B cell (primary cell): ENCODE measurements at regions of chr14 and their contacts with region 1.

Region 1: DNA sequence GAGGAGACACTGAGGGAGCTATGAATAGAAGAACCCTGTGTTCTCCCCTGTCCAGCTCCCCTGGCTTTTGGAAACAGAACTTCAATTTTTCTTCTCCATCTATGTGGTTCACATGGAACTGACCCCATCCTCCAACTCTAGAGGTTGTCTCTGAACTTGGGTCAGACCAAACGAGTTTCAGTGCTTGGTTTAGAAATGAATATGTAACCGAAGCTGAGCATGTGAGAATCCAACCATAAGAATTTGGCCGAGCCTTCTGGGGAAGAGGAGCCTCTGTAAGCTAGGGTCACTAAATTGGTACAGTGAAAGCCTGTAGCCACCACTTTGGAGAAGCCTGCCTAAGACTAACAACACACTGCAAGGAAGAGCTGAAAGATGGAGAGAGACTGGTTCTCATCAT is 464.4 kb downstream of the ZFP36L1 start:
- DNase-seq: no peak
- ATAC-seq: no peak
- H3K4me3 ChIP-seq: no peak overlapping the region
- H3K4me3 Mint-ChIP-seq: no peak overlapping the region
- H3K27ac ChIP-seq: no peak overlapping the region
- H3K27ac Mint-ChIP-seq: no peak overlapping the region
- H3K4me1 ChIP-seq: peaks cover 47 to 53% of the 10 kb centered on the region in 2 donors
- H3K4me1 Mint-ChIP-seq: peaks cover 59% of the 10 kb centered on the region
- H3K27me3 ChIP-seq: no peaks in the 10 kb centered on the region
- H3K27me3 Mint-ChIP-seq: no peaks in the 10 kb centered on the region
- CTCF ChIP-seq: no peak

Region 2: DNA sequence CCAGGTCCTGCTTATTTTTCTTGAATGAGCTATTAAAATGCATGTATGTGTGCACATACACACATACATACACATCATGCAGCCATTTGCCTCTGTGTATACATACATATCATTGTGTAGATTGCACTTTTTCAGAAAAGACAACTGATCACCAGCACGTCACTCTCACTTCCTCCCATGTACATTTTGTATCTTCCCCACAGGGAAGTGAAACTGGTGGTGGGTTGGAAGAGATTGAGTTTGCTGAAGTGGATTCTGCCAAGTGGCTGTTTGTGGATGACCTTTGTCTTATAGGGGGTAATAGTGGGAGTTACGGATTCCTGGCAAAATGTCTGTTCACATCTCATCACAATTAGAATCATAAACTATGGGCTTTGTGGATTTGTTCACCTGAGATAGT is 60.3 kb before region 1 on chr14:
- CTCF ChIA-PET with region 1: no interaction called
- POLR2A ChIA-PET with region 1: no interaction called
- intact Hi-C with region 1: loop called (anchors 5 kb)
- DNase-seq: peak; percentile 92
- ATAC-seq: peak; percentile 71
- H3K4me3 ChIP-seq: peak overlapping the region in 1 of 5 experiments; percentile 14
- H3K4me3 Mint-ChIP-seq: peak overlapping the region; percentile 72
- H3K27ac ChIP-seq: peak overlapping the region; percentile 78 to 94
- H3K27ac Mint-ChIP-seq: peak overlapping the region; percentile 95
- H3K4me1 ChIP-seq: peaks cover 78 to 89% of the 10 kb centered on the region in 2 donors
- H3K4me1 Mint-ChIP-seq: peaks cover 80% of the 10 kb centered on the region
- H3K27me3 ChIP-seq: no peaks in the 10 kb centered on the region
- H3K27me3 Mint-ChIP-seq: no peaks in the 10 kb centered on the region
- CTCF ChIP-seq: no peak

Region 3: GRCh38 chr14:68307014-68307789 is 21.3 kb before region 1 on chr14:
- CTCF ChIA-PET with region 1: interaction called, 4 read pairs
- POLR2A ChIA-PET with region 1: no interaction called
- intact Hi-C with region 1: loop called (anchors 2 kb)
- DNase-seq: no peak
- ATAC-seq: no peak
- H3K4me3 ChIP-seq: no peak overlapping the region
- H3K4me3 Mint-ChIP-seq: no peak overlapping the region
- H3K27ac ChIP-seq: no peak overlapping the region
- H3K27ac Mint-ChIP-seq: no peak overlapping the region
- H3K4me1 ChIP-seq: peaks cover 54 to 56% of the 10 kb centered on the region in 2 donors
- H3K4me1 Mint-ChIP-seq: peaks cover 63% of the 10 kb centered on the region
- H3K27me3 ChIP-seq: no peaks in the 10 kb centered on the region
- H3K27me3 Mint-ChIP-seq: no peaks in the 10 kb centered on the region
- CTCF ChIP-seq: no peak

Region 4: DNA sequence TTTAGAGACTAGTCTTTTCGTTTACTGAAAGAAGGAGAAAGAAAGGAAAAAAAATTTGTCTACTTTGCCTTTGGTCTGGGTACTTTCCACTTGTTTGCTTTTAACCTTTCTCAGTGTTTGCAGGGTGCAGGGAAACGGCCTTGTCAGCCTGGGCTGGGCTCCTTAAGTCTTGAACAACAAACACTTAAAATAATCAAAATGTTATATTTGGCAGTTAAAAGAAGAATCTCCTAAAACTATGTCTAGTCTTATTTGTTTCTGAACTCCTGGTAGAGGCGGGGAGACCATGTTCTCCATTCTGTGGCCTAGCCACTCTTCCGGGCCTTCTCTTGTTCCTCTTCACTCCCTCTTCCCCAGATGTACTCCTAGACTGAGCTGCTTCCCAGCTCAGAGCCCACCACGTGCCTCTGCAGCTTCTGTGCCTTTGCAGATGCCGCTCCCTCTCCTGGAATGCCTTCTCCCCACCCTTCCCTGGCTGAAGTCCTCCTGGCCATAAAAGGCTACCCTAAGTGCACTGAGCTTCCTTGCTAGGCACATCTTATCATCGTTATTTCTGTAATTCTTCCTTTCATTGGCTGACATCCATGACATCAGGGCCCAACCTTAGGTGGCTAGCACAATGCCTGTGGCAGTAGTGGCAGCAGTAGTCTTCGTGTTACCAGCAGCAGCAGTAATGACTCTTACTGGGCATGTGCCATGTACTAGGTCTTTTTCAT is 31.5 kb after region 1 on chr14:
- CTCF ChIA-PET with region 1: interaction called, 7 read pairs
- POLR2A ChIA-PET with region 1: interaction called, 12 read pairs
- intact Hi-C with region 1: no loop called
- DNase-seq: peak; percentile 35
- ATAC-seq: no peak
- H3K4me3 ChIP-seq: peak overlapping the region in 1 of 5 experiments; percentile 6
- H3K4me3 Mint-ChIP-seq: peak overlapping the region; percentile 72
- H3K27ac ChIP-seq: peak overlapping the region; percentile 66 to 71
- H3K27ac Mint-ChIP-seq: peak overlapping the region; percentile 95
- H3K4me1 ChIP-seq: peaks cover 56 to 62% of the 10 kb centered on the region in 2 donors
- H3K4me1 Mint-ChIP-seq: peaks cover 66% of the 10 kb centered on the region
- H3K27me3 ChIP-seq: no peaks in the 10 kb centered on the region
- H3K27me3 Mint-ChIP-seq: no peaks in the 10 kb centered on the region
- CTCF ChIP-seq: no peak

Region 5: DNA sequence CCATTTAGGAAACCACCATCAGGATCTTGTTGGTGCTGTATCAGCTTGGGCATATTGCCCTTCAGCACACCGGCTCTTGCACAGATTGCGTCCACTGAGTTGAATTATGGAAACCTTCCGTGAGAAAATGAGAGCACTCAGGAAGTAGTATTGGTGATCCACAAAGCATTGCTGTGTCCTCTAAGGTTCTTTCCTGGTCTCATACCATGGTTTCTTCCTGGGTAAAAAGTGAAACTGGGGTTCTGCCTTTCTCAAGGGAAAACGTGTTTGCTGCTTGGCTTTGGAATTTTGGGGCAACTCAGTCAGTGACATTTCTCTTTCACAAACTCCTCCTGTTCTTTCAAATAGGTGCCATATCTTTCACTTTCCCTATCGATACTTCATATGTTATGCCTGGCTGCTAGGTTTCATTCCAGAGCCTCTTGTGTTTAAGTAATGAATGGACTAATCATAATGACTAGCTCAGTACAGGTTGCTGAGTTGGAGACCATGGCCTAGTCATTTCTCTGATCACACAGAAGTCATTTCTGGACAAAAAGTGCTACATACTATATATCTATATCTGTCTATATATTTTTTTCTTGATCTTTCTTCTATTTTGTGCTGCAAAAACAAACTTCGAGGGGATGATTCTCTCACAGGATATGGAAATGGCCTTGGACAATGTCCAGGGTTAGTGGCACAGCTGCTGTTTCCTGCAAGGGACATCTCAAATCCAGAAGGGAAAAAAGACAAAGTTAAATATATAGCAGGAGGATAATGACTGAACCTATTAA is 41.0 kb after region 1 on chr14:
- CTCF ChIA-PET with region 1: interaction called, 3 read pairs
- POLR2A ChIA-PET with region 1: no interaction called
- intact Hi-C with region 1: loop called (anchors 2 kb)
- DNase-seq: peak; percentile 52
- ATAC-seq: peak; percentile 4
- H3K4me3 ChIP-seq: peak overlapping the region in 4 of 5 experiments; percentile 1 to 20 (median 14)
- H3K4me3 Mint-ChIP-seq: peak overlapping the region; percentile 73
- H3K27ac ChIP-seq: peak overlapping the region; percentile 78 to 84
- H3K27ac Mint-ChIP-seq: peak overlapping the region; percentile 97
- H3K4me1 ChIP-seq: peaks cover 78 to 92% of the 10 kb centered on the region in 2 donors
- H3K4me1 Mint-ChIP-seq: peaks cover 93% of the 10 kb centered on the region
- H3K27me3 ChIP-seq: no peaks in the 10 kb centered on the region
- H3K27me3 Mint-ChIP-seq: no peaks in the 10 kb centered on the region
- CTCF ChIP-seq: no peak